Calu3 (cell line): ENCODE measurements at regions of chr4 and their contacts with region 1.

Region 1: GRCh38 chr4:69689599-69689998 is 36.6 kb upstream of the UGT2A1 start:
- DNase-seq: peak; percentile 9
- H3K4me3 Mint-ChIP-seq: no peak overlapping the region
- H3K27ac Mint-ChIP-seq: no peak overlapping the region
- H3K4me1 Mint-ChIP-seq: peaks cover 6% of the 10 kb centered on the region
- H3K27me3 Mint-ChIP-seq: no peaks in the 10 kb centered on the region
- CTCF ChIP-seq: peak; percentile 28

Region 2: DNA sequence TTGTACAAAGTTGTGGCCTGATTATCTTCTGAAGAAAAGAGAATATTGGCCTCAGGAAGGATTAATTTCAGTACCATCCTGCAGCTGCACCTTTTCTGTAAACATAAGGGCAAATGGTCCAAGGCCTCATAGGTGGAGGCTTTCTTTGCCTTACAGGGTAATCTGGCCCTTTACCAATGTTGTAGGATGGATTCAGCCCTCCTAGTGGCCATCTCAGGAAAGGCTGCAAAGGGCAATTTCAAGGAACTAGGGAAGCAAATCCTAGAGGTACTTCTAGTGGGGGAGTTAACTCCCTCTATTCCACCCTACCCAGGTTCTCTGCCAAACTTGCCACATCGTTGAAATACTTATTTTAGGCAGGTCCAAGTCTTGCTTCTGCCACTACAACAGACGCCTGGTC is 532.7 kb before region 1 on chr4:
- CTCF ChIA-PET with region 1: no interaction called
- intact Hi-C with region 1: no loop called
- DNase-seq: peak; percentile 27
- H3K4me3 Mint-ChIP-seq: no peak overlapping the region
- H3K27ac Mint-ChIP-seq: no peak overlapping the region
- H3K4me1 Mint-ChIP-seq: no peaks in the 10 kb centered on the region
- H3K27me3 Mint-ChIP-seq: no peaks in the 10 kb centered on the region
- CTCF ChIP-seq: no peak

Region 3: GRCh38 chr4:69668680-69669079 is 20.9 kb before region 1 on chr4:
- CTCF ChIA-PET with region 1: no interaction called
- intact Hi-C with region 1: no loop called
- DNase-seq: no peak
- H3K4me3 Mint-ChIP-seq: no peak overlapping the region
- H3K27ac Mint-ChIP-seq: no peak overlapping the region
- H3K4me1 Mint-ChIP-seq: no peaks in the 10 kb centered on the region
- H3K27me3 Mint-ChIP-seq: no peaks in the 10 kb centered on the region
- CTCF ChIP-seq: no peak

Region 4: GRCh38 chr4:69800599-69800998 is 111.0 kb after region 1 on chr4:
- CTCF ChIA-PET with region 1: no interaction called
- intact Hi-C with region 1: no loop called
- DNase-seq: no peak
- H3K4me3 Mint-ChIP-seq: no peak overlapping the region
- H3K27ac Mint-ChIP-seq: no peak overlapping the region
- H3K4me1 Mint-ChIP-seq: no peaks in the 10 kb centered on the region
- H3K27me3 Mint-ChIP-seq: no peaks in the 10 kb centered on the region
- CTCF ChIP-seq: no peak

Region 5: GRCh38 chr4:69823481-69824186 is 134.0 kb after region 1 on chr4:
- CTCF ChIA-PET with region 1: interaction called, 9 read pairs
- intact Hi-C with region 1: loop called (anchors 1 kb)
- DNase-seq: peak; percentile 70
- H3K4me3 Mint-ChIP-seq: no peak overlapping the region
- H3K27ac Mint-ChIP-seq: peak overlapping the region; percentile 16
- H3K4me1 Mint-ChIP-seq: no peaks in the 10 kb centered on the region
- H3K27me3 Mint-ChIP-seq: no peaks in the 10 kb centered on the region
- CTCF ChIP-seq: no peak

Region 6: DNA sequence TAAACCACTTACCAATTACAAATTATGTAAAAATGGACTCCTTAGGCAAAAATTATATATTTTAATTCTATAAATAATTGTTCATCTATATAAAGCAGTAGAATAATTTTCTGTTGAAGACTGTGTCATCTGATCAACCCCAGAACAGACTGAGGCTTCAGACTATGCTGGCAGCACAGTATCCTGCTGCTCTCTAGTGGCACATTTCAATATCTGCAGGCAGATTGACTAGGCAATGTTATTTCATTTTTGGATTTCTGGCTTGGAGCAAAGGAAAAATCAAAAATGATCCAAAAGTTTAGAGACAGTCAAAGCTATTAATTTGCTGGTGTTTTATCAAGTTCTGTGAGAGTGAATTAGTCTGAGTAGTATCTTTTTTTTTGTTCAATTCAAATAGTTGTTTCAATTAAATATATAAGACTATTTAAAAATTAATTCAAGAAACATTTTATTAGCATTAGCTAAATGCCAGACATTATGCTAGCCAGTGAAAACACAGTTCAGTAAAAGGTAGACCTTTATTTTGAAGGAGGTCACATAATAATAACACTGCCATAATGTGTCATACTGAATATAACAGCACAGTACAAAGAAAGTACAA is 191.7 kb after region 1 on chr4:
- CTCF ChIA-PET with region 1: interaction called, 3 read pairs
- intact Hi-C with region 1: loop called (anchors 1 kb)
- DNase-seq: peak; percentile 6
- H3K4me3 Mint-ChIP-seq: no peak overlapping the region
- H3K27ac Mint-ChIP-seq: no peak overlapping the region
- H3K4me1 Mint-ChIP-seq: peaks cover 22% of the 10 kb centered on the region
- H3K27me3 Mint-ChIP-seq: no peaks in the 10 kb centered on the region
- CTCF ChIP-seq: peak; percentile 61

Region 7: GRCh38 chr4:70183168-70183939 is 493.8 kb after region 1 on chr4:
- CTCF ChIA-PET with region 1: no interaction called
- intact Hi-C with region 1: loop called (anchors 5 kb)
- DNase-seq: peak; percentile 60
- H3K4me3 Mint-ChIP-seq: peak overlapping the region; percentile 39
- H3K27ac Mint-ChIP-seq: peak overlapping the region; percentile 85
- H3K4me1 Mint-ChIP-seq: peaks cover 59% of the 10 kb centered on the region
- H3K27me3 Mint-ChIP-seq: no peaks in the 10 kb centered on the region
- CTCF ChIP-seq: peak; percentile 39

Region 8: DNA sequence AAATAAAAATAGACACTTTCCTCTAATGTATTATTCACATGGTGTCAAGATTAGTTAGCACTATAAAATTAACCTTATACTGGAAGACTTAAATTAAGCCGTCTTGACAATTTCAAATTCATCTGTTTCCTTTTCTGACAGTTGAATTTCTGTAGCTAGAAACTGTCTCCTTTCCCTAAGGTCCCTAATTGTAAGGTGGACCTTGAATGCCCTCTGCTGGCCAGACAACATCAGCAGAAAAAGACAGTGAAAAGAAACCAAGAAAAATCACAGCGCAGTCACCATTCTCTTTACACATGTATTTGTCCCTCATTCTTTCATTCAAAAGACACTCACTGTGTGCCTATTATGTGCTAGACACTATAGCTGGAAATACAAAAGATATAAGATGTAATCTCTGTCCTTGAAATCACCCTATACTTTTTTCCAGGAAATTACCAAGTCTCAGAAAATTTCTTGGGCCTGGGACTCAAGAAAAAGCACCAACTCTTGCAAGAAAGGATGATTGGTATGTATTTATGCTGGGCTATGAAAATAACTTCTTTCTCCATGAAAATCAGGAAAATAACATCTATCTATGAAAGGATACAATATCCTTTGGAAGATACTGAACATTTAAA is 869.7 kb after region 1 on chr4:
- CTCF ChIA-PET with region 1: no interaction called
- intact Hi-C with region 1: loop called (anchors 2 kb)
- DNase-seq: peak; percentile 53
- H3K4me3 Mint-ChIP-seq: peak overlapping the region; percentile 50
- H3K27ac Mint-ChIP-seq: peak overlapping the region; percentile 60
- H3K4me1 Mint-ChIP-seq: peaks cover 8% of the 10 kb centered on the region
- H3K27me3 Mint-ChIP-seq: no peaks in the 10 kb centered on the region
- CTCF ChIP-seq: peak; percentile 36

Region 9: DNA sequence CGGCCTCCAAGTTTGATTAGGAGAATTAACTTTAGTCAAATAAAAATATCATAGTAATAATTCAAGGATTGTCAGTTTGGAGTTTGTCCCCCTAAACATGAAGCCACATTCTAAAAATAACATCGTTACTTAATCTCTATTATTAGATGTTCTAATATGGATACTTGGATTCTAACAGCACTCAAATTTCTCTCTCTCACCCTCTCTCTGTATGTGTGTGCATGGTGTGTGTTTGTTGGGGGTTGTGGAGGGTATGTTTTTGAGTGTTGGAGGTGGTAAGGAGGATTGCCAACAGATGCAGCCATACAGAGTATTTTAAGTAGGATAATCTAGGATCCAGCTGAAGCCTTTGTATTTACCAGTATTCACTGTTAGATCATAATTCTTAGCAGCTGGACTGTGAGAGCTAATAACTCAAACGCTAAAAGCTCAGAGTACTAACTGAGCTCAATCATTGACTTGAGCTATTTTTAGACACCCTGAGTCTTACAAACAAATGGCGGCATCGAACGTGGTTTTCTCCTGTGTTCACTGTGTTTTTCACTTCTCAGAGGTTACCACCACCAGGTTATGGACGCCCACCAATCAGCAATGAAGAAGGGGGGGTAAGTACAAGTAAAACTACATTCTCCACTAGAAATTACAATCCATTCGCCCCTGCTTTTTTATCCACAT is 947.8 kb after region 1 on chr4:
- CTCF ChIA-PET with region 1: no interaction called
- intact Hi-C with region 1: no loop called
- DNase-seq: no peak
- H3K4me3 Mint-ChIP-seq: peak overlapping the region; percentile 21
- H3K27ac Mint-ChIP-seq: peak overlapping the region; percentile 72
- H3K4me1 Mint-ChIP-seq: no peaks in the 10 kb centered on the region
- H3K27me3 Mint-ChIP-seq: no peaks in the 10 kb centered on the region
- CTCF ChIP-seq: no peak